ENCODE measurements at regions of chr2 and their contacts with region 1.

Region 1: DNA sequence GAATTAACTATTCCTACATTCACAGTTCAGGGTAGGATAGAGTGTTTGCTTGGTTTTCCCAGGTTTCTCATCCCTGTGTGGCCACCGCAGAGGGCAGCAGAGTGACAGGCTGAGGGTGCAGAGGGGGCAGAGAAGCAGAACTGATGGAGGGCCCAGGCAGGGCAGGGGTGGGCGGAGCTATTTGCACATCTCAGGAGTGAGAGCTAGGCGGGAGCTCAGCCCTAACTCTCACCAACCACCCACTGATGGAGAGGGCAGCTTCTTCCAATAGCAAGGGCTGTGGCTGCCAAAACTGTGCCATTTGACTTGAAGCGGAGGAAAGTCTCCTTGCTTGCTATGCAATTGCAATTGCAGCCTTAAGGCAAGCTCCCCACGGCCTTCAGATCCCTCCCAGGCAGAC is 12.0 kb upstream of the DARS1 start:
- DNase-seq: peak; percentile 51 to 87
- H3K4me3 ChIP-seq: no peak overlapping the region
- H3K27ac ChIP-seq: no peak overlapping the region
- H3K4me1 ChIP-seq: peaks cover 0 to 4% (median under 1%) of the 10 kb centered on the region in 4 experiments; a peak in 2 of 7 replicates
- H3K27me3 ChIP-seq: no peaks in the 10 kb centered on the region
- CTCF ChIP-seq: peak; percentile 76 to 83 (median 77)
- EP300 ChIP-seq: no peak
- POLR2A ChIP-seq: no peak
- RAD21 ChIP-seq: peak; percentile 90 to 94

Region 2: GRCh38 chr2:135913727-135914365 is 83.5 kb before region 1 on chr2:
- CTCF ChIA-PET with region 1: interaction called, 18 read pairs
- POLR2A ChIA-PET with region 1: no interaction called
- DNase-seq: no peak
- H3K4me3 ChIP-seq: no peak overlapping the region
- H3K27ac ChIP-seq: no peak overlapping the region
- H3K4me1 ChIP-seq: no peaks in the 10 kb centered on the region
- H3K27me3 ChIP-seq: no peaks in the 10 kb centered on the region
- CTCF ChIP-seq: peak in 2 of 3 experiments; percentile 36 to 47; a peak in 2 of 4 replicates
- EP300 ChIP-seq: no peak
- POLR2A ChIP-seq: no peak
- RAD21 ChIP-seq: peak; percentile 59 to 75

Region 3: DNA sequence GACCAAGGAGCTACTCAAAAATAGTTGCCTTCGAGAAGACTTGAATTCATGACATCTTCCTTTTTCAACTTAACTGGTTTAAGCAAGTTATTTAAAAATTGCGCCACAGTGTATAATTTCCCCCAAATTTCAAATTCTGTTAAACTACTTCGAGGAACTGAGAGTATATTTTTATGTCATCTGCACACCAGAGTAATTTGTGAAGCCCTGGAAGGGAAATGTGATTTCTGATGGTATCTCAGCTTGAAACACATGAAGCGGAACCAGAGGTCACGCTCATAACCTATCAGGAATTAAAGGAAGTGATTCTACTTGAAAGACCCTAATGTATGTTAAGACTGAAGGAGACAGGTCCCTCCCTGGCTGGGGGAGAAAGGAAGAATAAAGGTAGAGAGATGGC is 21.9 kb after region 1 on chr2:
- CTCF ChIA-PET with region 1: interaction called, 14 read pairs
- POLR2A ChIA-PET with region 1: no interaction called
- DNase-seq: no peak
- H3K4me3 ChIP-seq: no peak overlapping the region
- H3K27ac ChIP-seq: no peak overlapping the region
- H3K4me1 ChIP-seq: peaks cover 0 to 2% (median under 1%) of the 10 kb centered on the region in 4 experiments; a peak in 1 of 7 replicates
- H3K27me3 ChIP-seq: no peaks in the 10 kb centered on the region
- CTCF ChIP-seq: no peak
- EP300 ChIP-seq: no peak
- POLR2A ChIP-seq: no peak
- RAD21 ChIP-seq: no peak

Region 4: GRCh38 chr2:136059036-136059472 is 61.7 kb after region 1 on chr2:
- CTCF ChIA-PET with region 1: interaction called, 10 read pairs
- POLR2A ChIA-PET with region 1: no interaction called
- DNase-seq: no peak
- H3K4me3 ChIP-seq: no peak overlapping the region
- H3K27ac ChIP-seq: no peak overlapping the region
- H3K4me1 ChIP-seq: no peaks in the 10 kb centered on the region; a peak in 1 of 7 replicates
- H3K27me3 ChIP-seq: no peaks in the 10 kb centered on the region
- CTCF ChIP-seq: no peak
- EP300 ChIP-seq: no peak
- POLR2A ChIP-seq: no peak
- RAD21 ChIP-seq: no peak

Region 5: GRCh38 chr2:136378712-136379595 is 381.6 kb after region 1 on chr2:
- CTCF ChIA-PET with region 1: interaction called, 20 read pairs
- POLR2A ChIA-PET with region 1: no interaction called
- DNase-seq: peak; percentile 31 to 71
- H3K4me3 ChIP-seq: no peak overlapping the region
- H3K27ac ChIP-seq: no peak overlapping the region
- H3K4me1 ChIP-seq: no peaks in the 10 kb centered on the region
- H3K27me3 ChIP-seq: no peaks in the 10 kb centered on the region
- CTCF ChIP-seq: peak; percentile 53 to 87 (median 80)
- EP300 ChIP-seq: no peak
- POLR2A ChIP-seq: no peak
- RAD21 ChIP-seq: peak; percentile 97

Measured in H1 (cell line).